HCT116 (cell line): ENCODE measurements at regions of chr12 and their contacts with region 1.

Region 1: GRCh38 chr12:6825398-6826124 is 2.6 kb upstream of the P3H3 start:
- DNase-seq: peak; percentile 47
- ATAC-seq: peak; percentile 46
- H3K4me3 ChIP-seq: no peak overlapping the region
- H3K27ac ChIP-seq: 0 out of 2 replicates have a peak overlapping the region, but pooled peaks have one; percentile 78
- H3K4me1 ChIP-seq: peaks cover 25 to 54% of the 10 kb centered on the region in 2 experiments
- H3K27me3 ChIP-seq: peaks cover 6% of the 10 kb centered on the region; the same call in 1 of the 2 replicates
- CTCF ChIP-seq: peak in 2 of 3 experiments; percentile 91 to 98; a peak in 4 of 6 replicates
- POLR2A ChIP-seq: no peak
- RAD21 ChIP-seq: no peak

Region 2: DNA sequence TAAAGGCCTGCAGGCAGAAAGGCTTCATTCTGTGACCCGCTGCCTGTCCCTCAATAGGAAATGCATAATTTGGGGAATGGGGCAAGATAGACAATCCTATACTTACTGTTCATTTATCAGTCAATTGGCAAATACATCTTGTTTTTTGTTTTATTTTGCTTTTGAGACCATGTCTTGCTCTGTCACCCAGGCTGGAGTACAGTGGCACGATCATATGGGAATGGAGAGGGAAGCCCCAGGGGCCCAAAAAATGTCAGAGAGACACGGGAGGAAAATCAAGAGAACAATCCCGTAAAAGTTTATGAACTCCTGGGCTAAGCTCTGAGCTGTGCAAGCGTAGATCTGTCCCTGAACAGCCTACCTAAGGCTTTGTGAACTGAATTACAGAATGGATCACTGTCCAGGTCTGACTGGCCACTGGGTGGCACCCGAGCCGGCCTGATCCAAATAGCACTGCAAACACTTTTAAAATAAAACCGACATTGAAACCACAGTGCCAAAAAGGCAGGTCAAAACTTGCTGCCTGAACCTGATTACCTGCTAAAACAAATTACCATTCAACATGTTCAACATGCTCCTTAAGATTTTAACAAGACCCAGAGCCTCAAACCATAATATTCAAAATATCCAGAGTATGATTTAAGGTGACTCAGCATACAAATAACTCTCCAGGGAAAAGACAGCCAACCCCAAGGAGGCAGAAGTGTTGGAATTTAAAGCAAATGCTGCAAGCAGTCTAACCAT is 89.9 kb before region 1 on chr12:
- CTCF ChIA-PET with region 1: no interaction called
- POLR2A ChIA-PET with region 1: no interaction called
- RAD21 ChIA-PET with region 1: no interaction called
- intact Hi-C with region 1: loop called (anchors 1 kb)
- DNase-seq: no peak
- ATAC-seq: peak; percentile 97
- H3K4me3 ChIP-seq: no peak overlapping the region
- H3K27ac ChIP-seq: peak overlapping the region; percentile 63; the same call in 1 of the 2 replicates
- H3K4me1 ChIP-seq: peaks cover 4 to 10% of the 10 kb centered on the region in 2 experiments
- H3K27me3 ChIP-seq: no peaks in the 10 kb centered on the region
- CTCF ChIP-seq: peak; percentile 85 to 86 (median 86)
- POLR2A ChIP-seq: no peak
- RAD21 ChIP-seq: peak; percentile 81

Region 3: GRCh38 chr12:6764011-6764828 is 61.3 kb before region 1 on chr12:
- CTCF ChIA-PET with region 1: interaction called, 5 read pairs
- POLR2A ChIA-PET with region 1: interaction called, 10 read pairs
- RAD21 ChIA-PET with region 1: no interaction called
- intact Hi-C with region 1: no loop called
- DNase-seq: peak; percentile 99
- ATAC-seq: peak; percentile 80
- H3K4me3 ChIP-seq: peak overlapping the region; percentile 85 to 90
- H3K27ac ChIP-seq: peak overlapping the region; percentile 72
- H3K4me1 ChIP-seq: peaks cover 54 to 74% of the 10 kb centered on the region in 2 experiments
- H3K27me3 ChIP-seq: no peaks in the 10 kb centered on the region
- CTCF ChIP-seq: no peak
- POLR2A ChIP-seq: peak; percentile 53
- RAD21 ChIP-seq: no peak

Region 4: GRCh38 chr12:6867413-6868210 is 42.1 kb after region 1 on chr12 and contains the start of gene TPI1:
- CTCF ChIA-PET with region 1: no interaction called
- POLR2A ChIA-PET with region 1: interaction called, 11 read pairs
- RAD21 ChIA-PET with region 1: no interaction called
- intact Hi-C with region 1: no loop called
- DNase-seq: no peak
- ATAC-seq: peak; percentile 73
- H3K4me3 ChIP-seq: peak within 1 kb of the TSS; percentile 97 to 99
- H3K27ac ChIP-seq: peak within 1 kb of the TSS; percentile 96
- H3K4me1 ChIP-seq: peaks cover 33 to 61% of the 10 kb centered on the region in 2 experiments
- H3K27me3 ChIP-seq: no peaks in the 10 kb centered on the region
- CTCF ChIP-seq: no peak
- POLR2A ChIP-seq: peak; percentile 99
- RAD21 ChIP-seq: no peak
- total RNA-seq, gene TPI1: 1,068 TPM